Right ventricle myocardium inferior (tissue), 1 donor: ENCODE measurements at regions of chr1 and their contacts with region 1.

Region 1: GRCh38 chr1:205812878-205813754 is at the start of gene SLC41A1:
- DNase-seq: peak; percentile 95
- ATAC-seq: peak; percentile 94
- total RNA-seq, gene SLC41A1: 458 TPM

Region 2: GRCh38 chr1:205749234-205750137 is 63.6 kb before region 1 on chr1:
- intact Hi-C with region 1: loop called (anchors 1 kb)
- DNase-seq: peak; percentile 96
- ATAC-seq: peak; percentile 94

Region 3: DNA sequence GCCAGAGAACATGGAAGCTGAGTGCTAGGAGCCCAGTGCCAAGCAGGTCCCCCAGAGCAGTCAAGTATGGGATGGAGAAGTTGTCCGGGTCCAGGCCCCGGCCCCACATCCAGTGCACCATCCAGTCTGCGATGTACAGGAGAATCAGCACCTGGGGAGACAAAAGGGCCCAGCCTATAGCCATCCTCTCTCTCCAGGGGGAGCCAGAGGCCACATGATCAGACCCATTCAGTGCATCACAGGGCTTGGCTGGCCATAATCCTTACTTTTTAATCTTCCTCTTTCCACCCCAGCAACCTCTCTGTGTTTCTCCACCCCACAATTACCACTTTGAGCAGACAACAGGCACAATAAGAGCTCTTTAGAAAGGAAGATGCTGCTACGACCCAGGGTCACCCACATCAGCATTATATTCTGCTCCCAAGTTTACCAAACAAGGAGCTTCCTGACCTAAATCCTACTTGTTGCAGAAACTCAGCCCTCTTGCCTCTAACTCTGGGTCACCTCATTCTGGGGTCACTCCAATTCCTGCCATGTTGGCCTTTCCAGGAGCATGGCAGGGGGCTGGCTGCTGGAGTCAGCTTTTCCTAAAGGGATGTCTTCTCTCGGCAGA is 21.4 kb before region 1 on chr1:
- intact Hi-C with region 1: no loop called
- DNase-seq: no peak
- ATAC-seq: peak; percentile 58

Region 4: DNA sequence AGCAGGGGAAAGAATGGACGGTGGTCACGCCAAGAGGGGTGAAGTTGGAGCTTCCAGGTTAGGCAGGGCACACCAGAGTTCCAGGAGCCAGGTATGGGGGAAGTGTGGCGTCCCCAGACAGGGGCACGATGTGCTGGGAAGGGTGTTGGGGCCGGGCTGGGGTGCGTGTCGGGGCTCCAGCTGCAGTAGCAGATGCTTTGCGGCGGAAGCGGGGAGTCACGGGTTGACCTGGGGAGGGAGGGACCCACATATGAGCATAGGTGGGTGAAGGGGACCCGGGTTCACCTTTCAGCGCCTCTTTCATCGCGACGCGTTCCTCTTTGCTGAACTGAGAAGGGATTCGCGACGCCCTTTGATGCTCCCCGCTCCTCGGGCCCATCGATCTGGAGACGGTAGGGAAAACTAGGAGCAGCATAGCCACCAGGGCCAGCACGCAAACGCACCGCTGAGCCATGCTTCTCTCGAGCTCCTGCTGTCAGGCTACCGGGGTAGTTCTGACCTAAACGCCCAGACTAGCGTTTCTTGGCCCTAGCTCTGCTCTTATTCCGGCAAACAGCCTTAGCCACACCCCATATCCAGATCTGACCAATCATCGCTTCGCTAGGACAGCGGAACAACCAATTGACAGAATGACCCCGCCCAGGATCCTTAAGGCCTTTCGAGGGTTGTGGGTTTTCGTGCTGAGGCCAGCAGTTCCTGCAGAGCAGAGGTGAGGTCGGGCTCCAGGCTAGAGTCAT is 36.7 kb after region 1 on chr1 and contains the start of gene PM20D1:
- intact Hi-C with region 1: loop called (anchors 5 kb)
- DNase-seq: peak; percentile 82
- ATAC-seq: peak; percentile 100
- total RNA-seq, gene PM20D1: 1.7 TPM

Region 5: GRCh38 chr1:205896320-205896719 is 83.2 kb after region 1 on chr1:
- intact Hi-C with region 1: no loop called
- DNase-seq: no peak
- ATAC-seq: no peak

Region 6: DNA sequence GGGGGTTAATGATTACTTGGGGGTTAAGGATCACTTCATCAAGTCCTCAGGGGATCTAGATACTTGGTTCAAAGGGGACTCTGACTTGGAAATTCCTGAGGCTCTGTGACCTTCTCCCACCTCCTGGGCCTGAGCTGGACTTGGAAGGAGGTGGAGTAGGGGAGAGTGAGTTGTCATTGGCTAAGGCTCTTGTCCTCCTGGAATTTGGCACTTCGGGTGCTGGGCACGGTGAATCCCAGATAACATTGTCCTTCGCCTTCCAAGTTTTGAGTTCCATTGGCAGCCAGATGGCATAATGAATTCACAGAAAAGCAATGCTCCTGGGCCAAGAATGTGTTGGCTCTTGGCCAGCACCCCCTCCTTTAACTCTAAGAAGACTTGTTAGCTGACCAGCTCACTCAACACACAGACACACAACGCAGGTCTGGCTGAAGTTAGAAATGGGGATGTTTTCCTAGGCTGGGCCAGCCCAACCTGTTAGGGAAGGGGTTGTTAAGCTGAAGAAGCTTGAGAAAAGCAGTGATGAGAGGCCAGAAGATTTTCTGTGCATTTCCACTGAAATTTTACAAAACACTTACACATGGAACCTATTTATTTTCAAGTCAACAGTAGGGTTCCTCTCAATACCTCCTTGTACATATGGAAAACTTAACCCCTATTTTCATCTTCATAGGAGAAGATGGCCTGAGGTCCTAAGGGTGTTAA is 100.5 kb after region 1 on chr1:
- intact Hi-C with region 1: loop called (anchors 2 kb)
- DNase-seq: no peak
- ATAC-seq: peak; percentile 62